Sigmoid colon (tissue), 7 donors: ENCODE measurements at regions of chr3 and their contacts with region 1.

Region 1: GRCh38 chr3:12556671-12557472 is at the start of gene MKRN2:
- DNase-seq: peak; percentile 93
- H3K4me3 ChIP-seq: peak within 1 kb of the TSS; percentile 75 to 94 (median 78)
- H3K27ac ChIP-seq: peak within 1 kb of the TSS; percentile 94 to 99 (median 96)
- H3K4me1 ChIP-seq: peaks cover 0 to 58% (median 42%) of the 10 kb centered on the region in 4 donors
- H3K27me3 ChIP-seq: peaks cover 0 to 18% (median 8%) of the 10 kb centered on the region in 3 donors
- CTCF ChIP-seq: no peak
- EP300 ChIP-seq: no peak
- POLR2A ChIP-seq: peak; percentile 87 to 92
- total RNA-seq, gene MKRN2: 27.4 to 37.4 (median 29.9) TPM

Region 2: DNA sequence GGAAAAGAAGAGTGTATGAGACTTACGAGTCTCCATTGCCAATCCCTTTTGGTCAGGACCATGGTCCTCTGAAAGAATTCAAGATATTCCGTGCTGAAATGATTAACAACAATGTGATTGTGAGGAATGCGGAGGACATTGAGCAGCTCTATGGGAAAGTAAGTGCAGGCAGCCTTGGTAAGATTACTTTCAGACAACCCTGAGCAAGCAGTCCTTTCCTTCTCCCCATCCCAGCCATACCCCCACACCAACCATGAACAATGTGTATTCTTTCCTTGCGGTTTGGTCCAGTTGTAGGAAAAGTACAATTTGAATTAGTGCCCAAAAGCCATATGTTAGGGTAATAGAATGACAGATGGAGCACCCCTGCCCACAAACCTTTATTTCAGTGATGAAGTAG is 67.0 kb before region 1 on chr3:
- intact Hi-C with region 1: loop called (anchors 5 kb)
- DNase-seq: no peak
- H3K4me3 ChIP-seq: no peak overlapping the region
- H3K27ac ChIP-seq: no peak overlapping the region
- H3K4me1 ChIP-seq: peaks cover 0 to 15% (median 7%) of the 10 kb centered on the region in 4 donors
- H3K27me3 ChIP-seq: no peaks in the 10 kb centered on the region
- CTCF ChIP-seq: no peak
- EP300 ChIP-seq: no peak
- POLR2A ChIP-seq: no peak

Region 3: DNA sequence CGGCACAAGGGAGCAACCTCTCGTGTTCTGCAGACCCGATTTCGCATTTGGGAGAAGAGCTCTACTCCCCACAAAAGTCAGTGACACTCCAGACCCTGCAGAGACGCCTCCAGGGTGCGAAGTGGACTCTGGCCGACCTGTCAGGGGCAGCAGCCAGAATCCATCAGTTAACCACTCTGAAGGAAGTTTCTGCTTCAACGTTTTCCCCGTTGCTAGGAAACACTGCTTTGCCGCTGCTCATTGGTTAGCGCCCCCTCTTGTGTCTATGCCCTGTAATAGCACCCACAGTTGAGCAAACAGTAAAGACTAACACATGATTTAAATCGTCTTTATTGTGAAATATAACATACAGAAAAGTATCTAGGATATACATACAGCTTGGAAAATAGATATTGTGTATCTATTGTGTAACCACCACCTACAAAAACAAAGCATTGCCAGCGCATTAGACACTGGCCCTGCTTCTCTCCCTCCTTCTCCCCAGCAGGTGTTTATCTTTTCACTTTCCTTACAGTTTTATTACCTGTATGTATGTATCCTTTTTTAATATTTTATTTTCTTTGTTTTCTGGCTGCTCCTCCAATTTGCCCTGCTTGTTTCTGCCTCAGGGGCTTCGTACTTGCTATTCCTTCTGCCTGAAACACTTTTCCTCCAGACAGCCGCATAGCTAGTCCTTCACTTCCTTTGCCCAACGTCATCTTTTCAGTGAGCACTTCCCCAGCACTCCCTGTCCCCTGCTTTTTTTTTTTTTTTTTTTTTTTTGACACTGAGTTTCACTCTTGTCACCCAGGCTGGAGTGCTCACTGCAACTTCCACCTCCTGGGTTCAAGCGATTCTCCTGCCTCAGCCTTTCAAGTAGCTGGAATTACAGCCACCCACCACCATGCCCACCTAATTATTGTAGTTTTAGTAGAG is 163.4 kb after region 1 on chr3:
- intact Hi-C with region 1: loop called (anchors 2 kb)
- DNase-seq: peak; percentile 89
- H3K4me3 ChIP-seq: peak overlapping the region in 3 of 4 donors; percentile 32 to 42 (median 41)
- H3K27ac ChIP-seq: peak overlapping the region in 2 of 4 donors; percentile 3 to 15
- H3K4me1 ChIP-seq: peaks cover 0 to 9% (median 7%) of the 10 kb centered on the region in 4 donors
- H3K27me3 ChIP-seq: no peaks in the 10 kb centered on the region
- CTCF ChIP-seq: peak; percentile 67 to 93 (median 88)
- EP300 ChIP-seq: no peak
- POLR2A ChIP-seq: no peak

Region 4: DNA sequence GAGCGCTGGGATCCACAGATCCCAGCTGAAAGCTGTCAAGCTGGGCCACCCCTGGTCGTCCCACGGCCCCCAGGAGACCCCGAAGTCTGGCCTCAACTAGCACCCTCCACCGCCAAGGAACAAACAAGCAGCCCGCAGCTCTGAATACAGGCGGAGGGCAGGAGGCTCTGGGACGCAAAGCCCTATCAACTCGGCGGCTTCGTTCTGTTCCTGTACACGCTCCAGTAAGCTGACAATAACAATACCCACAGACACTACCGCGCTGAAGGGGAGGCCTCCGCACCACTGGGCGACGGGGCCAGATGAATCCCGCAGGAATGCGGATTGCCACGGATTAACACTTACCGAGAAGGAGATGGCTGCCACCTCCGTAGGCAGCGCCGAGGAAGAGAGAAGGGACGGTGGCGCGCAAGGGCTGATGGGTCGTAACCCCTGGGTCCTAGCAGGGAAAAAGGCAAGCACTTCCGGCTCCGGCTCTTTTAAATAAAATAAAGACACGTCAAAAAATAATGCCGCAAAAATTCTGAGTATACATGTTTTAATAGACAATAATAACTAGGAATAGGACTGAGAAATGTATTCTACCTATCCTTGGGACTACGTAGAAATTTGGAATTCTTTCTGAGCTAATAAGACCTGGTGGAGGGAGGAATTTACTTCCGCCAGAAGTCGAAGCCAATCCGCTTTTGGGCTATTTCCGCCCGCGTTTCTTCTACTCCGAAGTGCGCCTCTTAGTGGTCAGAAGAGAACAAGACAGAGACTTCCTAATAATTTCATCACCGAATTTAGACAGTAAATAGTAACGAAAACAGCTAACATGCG is 284.5 kb after region 1 on chr3 and contains the start of gene RPL32:
- intact Hi-C with region 1: loop called (anchors 5 kb)
- DNase-seq: peak; percentile 94
- H3K4me3 ChIP-seq: peak within 1 kb of the TSS; percentile 55 to 73 (median 62)
- H3K27ac ChIP-seq: peak within 1 kb of the TSS; percentile 84 to 89 (median 88)
- H3K4me1 ChIP-seq: peaks cover 0 to 42% (median 34%) of the 10 kb centered on the region in 4 donors
- H3K27me3 ChIP-seq: no peaks in the 10 kb centered on the region
- CTCF ChIP-seq: peak; percentile 72 to 87 (median 76)
- EP300 ChIP-seq: no peak
- POLR2A ChIP-seq: peak; percentile 80 to 89
- total RNA-seq, gene RPL32: 920 to 2,637 (median 1,036) TPM